Panc1 (cell line): ENCODE measurements at regions of chr16 and their contacts with region 1.

Region 1: DNA sequence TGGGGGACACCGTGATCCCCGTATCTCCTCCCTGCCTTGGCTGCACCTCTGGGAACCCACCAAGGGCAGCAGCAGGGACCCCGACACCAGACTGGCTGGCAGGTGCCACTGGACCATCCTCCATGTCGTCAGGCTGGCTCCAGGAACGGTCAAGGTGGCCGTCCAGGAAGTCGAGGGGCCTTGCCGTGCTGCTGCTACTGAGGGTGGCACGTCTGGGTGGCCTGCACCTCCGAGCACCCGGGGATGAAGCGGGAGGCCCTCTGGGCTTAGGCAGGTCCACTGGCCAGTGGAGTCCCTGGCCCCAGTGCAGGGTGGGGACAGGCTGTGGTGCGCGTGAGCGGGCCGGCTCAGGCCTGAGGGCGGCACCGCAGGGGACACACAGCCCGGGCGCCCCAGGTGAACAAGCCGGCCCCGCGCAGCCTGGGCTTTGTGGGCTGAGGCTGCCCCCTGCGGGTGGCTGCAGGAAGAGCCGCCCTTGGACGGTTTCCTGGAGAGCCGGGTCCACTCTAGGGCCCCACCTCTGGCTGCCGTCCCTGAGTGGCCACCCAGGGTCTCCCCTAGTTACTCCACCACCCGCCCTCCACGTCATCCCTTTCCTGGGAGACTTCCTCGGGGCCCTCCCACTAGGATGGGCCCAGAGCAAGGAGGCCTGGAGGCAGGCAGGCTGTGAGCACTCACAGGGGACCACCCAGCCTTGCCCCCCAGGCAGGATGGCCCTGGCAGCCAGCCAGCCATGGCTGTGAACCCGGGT is 42.8 kb upstream of the ZC3H18 start:
- DNase-seq: peak; percentile 4
- ATAC-seq: peak; percentile 82
- H3K4me3 ChIP-seq: no peak overlapping the region
- H3K27ac ChIP-seq: no peak overlapping the region
- H3K4me1 ChIP-seq: no peaks in the 10 kb centered on the region
- H3K27me3 ChIP-seq: no peaks in the 10 kb centered on the region
- CTCF ChIP-seq: peak; percentile 93

Region 2: GRCh38 chr16:88442727-88443576 is 84.4 kb before region 1 on chr16:
- CTCF ChIA-PET with region 1: no interaction called
- POLR2A ChIA-PET with region 1: no interaction called
- in situ Hi-C with region 1: no loop called
- intact Hi-C with region 1: loop called (anchors 5 kb)
- DNase-seq: no peak
- ATAC-seq: peak; percentile 93
- H3K4me3 ChIP-seq: no peak overlapping the region
- H3K27ac ChIP-seq: no peak overlapping the region
- H3K4me1 ChIP-seq: no peaks in the 10 kb centered on the region
- H3K27me3 ChIP-seq: no peaks in the 10 kb centered on the region
- CTCF ChIP-seq: peak; percentile 90

Region 3: DNA sequence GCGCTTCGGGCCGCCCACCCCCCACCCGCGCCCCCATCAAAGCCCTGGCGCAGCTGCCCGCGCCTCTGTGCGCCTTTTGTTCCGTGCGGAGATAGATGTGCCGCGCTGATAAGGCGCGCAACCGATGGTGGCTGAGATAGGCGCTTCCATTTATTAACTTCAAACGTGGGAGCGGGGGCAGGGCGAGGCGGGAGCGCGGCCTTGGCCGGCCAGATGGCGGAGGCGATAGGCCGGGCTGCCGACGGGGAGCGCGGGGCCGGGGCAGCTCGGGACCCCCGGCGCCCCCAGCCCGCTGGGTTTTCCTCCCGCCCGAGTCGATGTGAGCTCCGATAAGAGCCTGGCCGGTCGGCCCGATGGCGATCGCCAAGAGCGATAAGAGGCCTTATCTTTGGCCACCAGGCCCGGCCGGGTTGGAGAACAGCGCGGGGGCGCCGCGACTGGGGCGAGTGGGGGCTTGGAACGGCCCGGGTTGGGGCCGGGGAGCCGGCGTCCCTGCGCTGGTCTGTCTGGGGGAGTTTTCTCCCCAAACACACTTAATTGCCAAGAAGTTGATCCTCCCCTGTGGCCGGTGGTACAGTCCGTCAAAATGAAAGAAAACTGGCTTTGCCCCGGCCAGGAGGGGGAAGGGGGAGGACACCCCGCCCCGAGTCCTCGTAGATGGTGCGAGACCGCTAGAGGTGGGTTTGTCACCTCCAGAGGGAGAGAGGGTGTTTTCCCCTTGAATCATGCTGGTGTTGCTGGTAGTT is 71.6 kb before region 1 on chr16:
- CTCF ChIA-PET with region 1: no interaction called
- POLR2A ChIA-PET with region 1: no interaction called
- in situ Hi-C with region 1: no loop called
- intact Hi-C with region 1: loop called (anchors 2 kb)
- DNase-seq: no peak
- ATAC-seq: peak; percentile 3; the same call in 1 of the 2 replicates
- H3K4me3 ChIP-seq: peak overlapping the region; percentile 51 to 71
- H3K27ac ChIP-seq: peak overlapping the region; percentile 66
- H3K4me1 ChIP-seq: peaks cover 17% of the 10 kb centered on the region
- H3K27me3 ChIP-seq: no peaks in the 10 kb centered on the region
- CTCF ChIP-seq: no peak